Activated CD4-positive, alpha-beta memory T cell treated with anti-CD3 and anti-CD28 coated beads for 36 hours (primary cell): ENCODE measurements at regions of chr9 and their contacts with region 1.

Region 1: DNA sequence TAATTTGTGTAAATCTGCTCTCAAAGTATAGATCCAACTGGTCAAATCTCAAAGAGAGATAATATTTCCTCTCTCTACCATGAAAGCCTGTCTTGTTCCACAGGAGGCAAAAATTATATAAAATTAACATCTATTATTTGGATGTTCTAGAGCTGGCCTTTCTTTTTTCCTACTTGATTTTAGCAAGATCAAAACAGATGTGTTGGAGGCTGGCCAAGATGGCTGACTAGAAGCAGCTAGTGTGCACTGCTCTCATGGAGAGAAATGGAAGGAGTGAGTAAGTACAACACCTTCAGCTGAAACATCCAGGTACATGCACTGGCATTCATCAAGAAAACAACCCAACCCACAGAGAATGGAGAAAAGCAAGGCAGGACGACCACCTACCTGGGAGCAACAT is 298.6 kb upstream of the SLC24A2 start:
- DNase-seq: no peak
- H3K4me3 Mint-ChIP-seq: no peak overlapping the region
- H3K27ac Mint-ChIP-seq: no peak overlapping the region
- H3K4me1 Mint-ChIP-seq: no peaks in the 10 kb centered on the region
- H3K27me3 Mint-ChIP-seq: peaks cover 2% of the 10 kb centered on the region

Region 2: DNA sequence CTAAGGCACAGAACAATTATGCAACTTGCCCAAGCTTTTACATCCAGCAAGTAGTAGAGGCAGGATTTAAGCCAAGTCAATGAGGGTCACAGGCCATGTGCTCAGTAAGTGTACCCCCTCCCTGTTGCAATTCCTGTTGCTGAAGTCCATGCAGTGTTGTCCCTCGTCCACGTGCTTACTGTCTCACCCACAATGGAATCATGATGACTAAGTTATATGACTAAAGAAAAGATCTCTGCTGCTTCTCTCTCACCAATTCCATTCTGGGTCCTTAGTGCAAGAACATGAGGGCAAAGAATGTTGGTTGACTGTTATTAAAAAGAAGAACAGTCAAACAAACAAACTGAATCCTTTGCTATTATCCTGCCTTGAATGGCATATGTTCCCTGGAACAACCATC is 65.1 kb before region 1 on chr9:
- CTCF ChIA-PET with region 1: no interaction called
- POLR2A ChIA-PET with region 1: no interaction called
- intact Hi-C with region 1: loop called (anchors 10 kb)
- DNase-seq: no peak
- H3K4me3 Mint-ChIP-seq: no peak overlapping the region
- H3K27ac Mint-ChIP-seq: no peak overlapping the region
- H3K4me1 Mint-ChIP-seq: no peaks in the 10 kb centered on the region
- H3K27me3 Mint-ChIP-seq: peaks cover 1% of the 10 kb centered on the region